Activated CD4-positive, alpha-beta memory T cell treated with anti-CD3 and anti-CD28 coated beads for 36 hours (primary cell): ENCODE measurements at regions of chr3 and their contacts with region 1.

Region 1: GRCh38 chr3:112111785-112112402 is 21.2 kb downstream of the GCSAM start:
- DNase-seq: peak; percentile 71
- H3K4me3 Mint-ChIP-seq: no peak overlapping the region
- H3K27ac Mint-ChIP-seq: no peak overlapping the region
- H3K4me1 Mint-ChIP-seq: peaks cover 7% of the 10 kb centered on the region
- H3K27me3 Mint-ChIP-seq: no peaks in the 10 kb centered on the region

Region 2: GRCh38 chr3:112097378-112097777 is 14.5 kb before region 1 on chr3:
- CTCF ChIA-PET with region 1: interaction called, 13 read pairs
- POLR2A ChIA-PET with region 1: no interaction called
- intact Hi-C with region 1: no loop called
- DNase-seq: peak; percentile 49
- H3K4me3 Mint-ChIP-seq: no peak overlapping the region
- H3K27ac Mint-ChIP-seq: no peak overlapping the region
- H3K4me1 Mint-ChIP-seq: peaks cover 21% of the 10 kb centered on the region
- H3K27me3 Mint-ChIP-seq: no peaks in the 10 kb centered on the region

Region 3: GRCh38 chr3:112136959-112137693 is 25.2 kb after region 1 on chr3:
- CTCF ChIA-PET with region 1: interaction called, 42 read pairs
- POLR2A ChIA-PET with region 1: no interaction called
- intact Hi-C with region 1: no loop called
- DNase-seq: peak; percentile 59
- H3K4me3 Mint-ChIP-seq: no peak overlapping the region
- H3K27ac Mint-ChIP-seq: no peak overlapping the region
- H3K4me1 Mint-ChIP-seq: peaks cover 70% of the 10 kb centered on the region
- H3K27me3 Mint-ChIP-seq: no peaks in the 10 kb centered on the region

Region 4: GRCh38 chr3:112321867-112322649 is 210.2 kb after region 1 on chr3:
- CTCF ChIA-PET with region 1: interaction called, 10 read pairs
- POLR2A ChIA-PET with region 1: no interaction called
- intact Hi-C with region 1: loop called (anchors 2 kb)
- DNase-seq: no peak
- H3K4me3 Mint-ChIP-seq: no peak overlapping the region
- H3K27ac Mint-ChIP-seq: no peak overlapping the region
- H3K4me1 Mint-ChIP-seq: no peaks in the 10 kb centered on the region
- H3K27me3 Mint-ChIP-seq: peaks cover 5% of the 10 kb centered on the region

Region 5: DNA sequence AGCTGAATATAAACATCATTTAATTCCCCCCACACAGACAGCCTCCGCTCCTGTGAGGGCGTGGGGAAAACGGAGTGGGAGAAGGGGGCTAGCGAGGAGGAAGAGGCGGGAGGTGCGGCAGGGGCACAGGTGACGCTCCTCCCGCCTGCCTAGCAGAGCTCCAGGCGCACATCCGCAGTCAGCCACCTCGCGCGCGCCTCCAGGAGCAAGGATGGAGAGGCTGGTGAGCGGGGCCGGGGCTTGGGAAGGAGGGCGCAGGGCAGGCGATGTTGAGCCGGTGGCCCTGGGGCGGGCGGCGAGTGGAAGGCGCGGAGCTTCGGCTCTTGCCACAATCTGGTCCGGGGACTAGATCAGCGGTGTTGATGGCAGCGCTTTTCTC is 221.1 kb after region 1 on chr3 and contains the start of gene CD200:
- CTCF ChIA-PET with region 1: interaction called, 21 read pairs
- POLR2A ChIA-PET with region 1: no interaction called
- intact Hi-C with region 1: no loop called
- DNase-seq: peak; percentile 71
- H3K4me3 Mint-ChIP-seq: peak within 1 kb of the TSS; percentile 87
- H3K27ac Mint-ChIP-seq: peak within 1 kb of the TSS; percentile 88
- H3K4me1 Mint-ChIP-seq: peaks cover 46% of the 10 kb centered on the region
- H3K27me3 Mint-ChIP-seq: no peaks in the 10 kb centered on the region
- total RNA-seq, gene CD200: 34.2 to 34.5 TPM

Region 6: GRCh38 chr3:112519424-112520001 is 407.6 kb after region 1 on chr3:
- CTCF ChIA-PET with region 1: interaction called, 14 read pairs
- POLR2A ChIA-PET with region 1: no interaction called
- intact Hi-C with region 1: loop called (anchors 1 kb)
- DNase-seq: no peak
- H3K4me3 Mint-ChIP-seq: no peak overlapping the region
- H3K27ac Mint-ChIP-seq: no peak overlapping the region
- H3K4me1 Mint-ChIP-seq: peaks cover 18% of the 10 kb centered on the region
- H3K27me3 Mint-ChIP-seq: no peaks in the 10 kb centered on the region